CD4-positive, alpha-beta memory T cell (primary cell): ENCODE measurements at regions of chr13 and their contacts with region 1.

Region 1: GRCh38 chr13:44484562-44485138 is 91.5 kb downstream of the TSC22D1 start:
- DNase-seq: no peak
- H3K4me3 ChIP-seq: no peak overlapping the region
- H3K4me3 Mint-ChIP-seq: peak overlapping the region; percentile 9 to 84 (median 64)
- H3K27ac ChIP-seq: no peak overlapping the region
- H3K27ac Mint-ChIP-seq: peak overlapping the region in 3 of 7 donors; percentile 7 to 73 (median 70)
- H3K4me1 ChIP-seq: peaks cover 17% of the 10 kb centered on the region
- H3K4me1 Mint-ChIP-seq: peaks cover 11 to 22% (median 12%) of the 10 kb centered on the region in 4 donors
- H3K27me3 ChIP-seq: no peaks in the 10 kb centered on the region
- H3K27me3 Mint-ChIP-seq: no peaks in the 10 kb centered on the region

Region 2: GRCh38 chr13:44340508-44340907 is 144.1 kb before region 1 on chr13:
- CTCF ChIA-PET with region 1: no interaction called
- POLR2A ChIA-PET with region 1: no interaction called
- intact Hi-C with region 1: no loop called
- DNase-seq: no peak
- H3K4me3 ChIP-seq: no peak overlapping the region
- H3K4me3 Mint-ChIP-seq: no peak overlapping the region
- H3K27ac ChIP-seq: no peak overlapping the region
- H3K27ac Mint-ChIP-seq: no peak overlapping the region
- H3K4me1 ChIP-seq: no peaks in the 10 kb centered on the region
- H3K4me1 Mint-ChIP-seq: peaks cover 0 to 4% (median under 1%) of the 10 kb centered on the region in 4 donors
- H3K27me3 ChIP-seq: no peaks in the 10 kb centered on the region
- H3K27me3 Mint-ChIP-seq: peaks cover 0 to 1% of the 10 kb centered on the region in 2 donors

Region 3: DNA sequence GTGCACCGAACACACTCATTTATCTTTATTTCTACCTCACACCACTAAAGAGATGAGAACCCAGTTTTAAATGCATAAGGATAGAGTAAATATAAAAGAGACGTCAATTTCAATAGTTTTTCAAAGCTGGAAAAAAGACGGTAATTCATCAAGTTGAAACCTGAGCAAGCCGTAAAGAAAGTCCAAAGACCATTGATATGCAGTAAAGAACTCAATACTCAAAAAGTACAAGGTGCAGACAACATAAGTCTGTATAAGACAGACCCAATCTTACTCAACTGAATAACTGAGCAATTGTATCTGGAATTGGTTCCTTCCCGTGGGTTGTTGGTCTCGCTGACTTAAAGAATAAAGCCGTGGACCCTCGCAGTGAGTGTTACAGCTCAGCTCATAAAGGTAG is 28.9 kb before region 1 on chr13:
- CTCF ChIA-PET with region 1: interaction called, 11 read pairs
- POLR2A ChIA-PET with region 1: no interaction called
- intact Hi-C with region 1: no loop called
- DNase-seq: no peak
- H3K4me3 ChIP-seq: no peak overlapping the region
- H3K4me3 Mint-ChIP-seq: no peak overlapping the region
- H3K27ac ChIP-seq: no peak overlapping the region
- H3K27ac Mint-ChIP-seq: no peak overlapping the region
- H3K4me1 ChIP-seq: no peaks in the 10 kb centered on the region
- H3K4me1 Mint-ChIP-seq: peaks cover 5 to 19% (median 10%) of the 10 kb centered on the region in 4 donors
- H3K27me3 ChIP-seq: no peaks in the 10 kb centered on the region
- H3K27me3 Mint-ChIP-seq: no peaks in the 10 kb centered on the region

Region 4: DNA sequence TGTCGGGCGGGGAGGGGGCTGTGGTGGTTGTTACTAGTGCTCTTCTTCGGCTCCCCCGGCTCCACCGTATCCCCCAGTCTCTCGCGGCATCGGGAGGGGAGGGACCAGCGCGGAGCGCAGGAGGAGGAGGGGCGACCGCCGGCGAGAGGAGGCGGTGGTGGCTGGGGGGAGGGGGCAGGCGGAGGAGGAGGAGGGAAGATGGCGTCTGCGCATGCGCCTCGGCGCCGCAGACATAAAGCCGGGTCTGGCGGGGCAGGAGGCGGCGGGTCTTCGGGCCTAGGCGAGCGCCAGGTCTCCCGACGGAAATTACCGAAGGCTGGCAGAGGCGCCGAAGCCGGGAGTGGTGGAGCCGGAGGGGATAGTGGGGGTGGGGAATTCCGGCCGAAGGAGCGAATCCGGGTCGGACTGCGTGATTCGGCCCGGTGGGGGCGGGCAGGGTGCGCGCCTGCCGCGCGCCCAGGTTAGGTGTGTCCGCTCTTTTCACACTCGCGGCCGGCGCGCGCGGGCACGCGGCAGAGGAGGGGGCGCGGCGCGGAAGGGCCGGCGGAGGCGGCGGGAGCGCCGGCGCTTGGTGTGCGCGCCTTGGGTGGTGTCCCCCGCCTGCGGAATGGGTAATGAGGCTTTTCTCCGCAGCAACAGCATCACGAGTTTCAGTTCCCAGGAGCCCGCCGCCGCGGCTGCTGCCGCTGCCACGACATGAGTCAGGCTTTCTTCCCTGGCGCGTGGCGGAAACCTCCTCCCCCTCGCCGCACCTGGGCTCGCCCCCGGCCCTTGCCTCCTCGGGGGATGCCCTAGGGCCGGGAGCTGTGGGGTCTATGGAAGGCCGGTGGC is 92.8 kb after region 1 on chr13:
- CTCF ChIA-PET with region 1: interaction called, 5 read pairs
- POLR2A ChIA-PET with region 1: interaction called, 4 read pairs
- intact Hi-C with region 1: loop called (anchors 2 kb)
- DNase-seq: peak; percentile 93 to 96 (median 94)
- H3K4me3 ChIP-seq: peak overlapping the region; percentile 47 to 86
- H3K4me3 Mint-ChIP-seq: peak overlapping the region; percentile 88 to 97 (median 94)
- H3K27ac ChIP-seq: peak overlapping the region; percentile 84
- H3K27ac Mint-ChIP-seq: peak overlapping the region; percentile 91 to 97 (median 95)
- H3K4me1 ChIP-seq: peaks cover 39% of the 10 kb centered on the region
- H3K4me1 Mint-ChIP-seq: peaks cover 28 to 46% (median 38%) of the 10 kb centered on the region in 4 donors
- H3K27me3 ChIP-seq: no peaks in the 10 kb centered on the region
- H3K27me3 Mint-ChIP-seq: no peaks in the 10 kb centered on the region

Region 5: DNA sequence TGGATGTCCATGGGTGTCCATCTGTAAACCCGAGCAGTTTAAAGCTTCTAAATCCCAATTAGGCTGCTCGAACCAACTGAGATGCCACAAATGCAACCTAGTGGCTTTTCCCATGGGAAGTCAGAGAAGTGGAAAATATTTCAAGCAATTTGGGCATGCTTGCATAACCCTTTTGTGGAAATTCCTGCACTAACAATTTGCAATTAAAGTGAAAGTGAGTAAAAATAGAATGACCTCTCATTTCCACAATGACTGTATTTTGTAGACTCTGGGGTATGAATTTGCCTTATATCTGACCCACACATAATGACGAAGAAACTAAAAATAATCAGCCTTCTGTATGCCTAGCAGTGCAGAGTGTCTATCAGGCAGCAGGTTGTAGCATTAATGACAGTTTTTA is 183.3 kb after region 1 on chr13:
- CTCF ChIA-PET with region 1: no interaction called
- POLR2A ChIA-PET with region 1: no interaction called
- intact Hi-C with region 1: no loop called
- DNase-seq: no peak
- H3K4me3 ChIP-seq: no peak overlapping the region
- H3K4me3 Mint-ChIP-seq: no peak overlapping the region
- H3K27ac ChIP-seq: no peak overlapping the region
- H3K27ac Mint-ChIP-seq: no peak overlapping the region
- H3K4me1 ChIP-seq: no peaks in the 10 kb centered on the region
- H3K4me1 Mint-ChIP-seq: no peaks in the 10 kb centered on the region
- H3K27me3 ChIP-seq: no peaks in the 10 kb centered on the region
- H3K27me3 Mint-ChIP-seq: peaks cover 10 to 13% of the 10 kb centered on the region in 2 donors

Region 6: GRCh38 chr13:44879463-44880058 is 394.9 kb after region 1 on chr13:
- CTCF ChIA-PET with region 1: interaction called, 15 read pairs
- POLR2A ChIA-PET with region 1: no interaction called
- intact Hi-C with region 1: loop called (anchors 1 kb)
- DNase-seq: no peak
- H3K4me3 ChIP-seq: no peak overlapping the region
- H3K4me3 Mint-ChIP-seq: no peak overlapping the region
- H3K27ac ChIP-seq: no peak overlapping the region
- H3K27ac Mint-ChIP-seq: peak overlapping the region in 2 of 7 donors; percentile 30 to 58
- H3K4me1 ChIP-seq: no peaks in the 10 kb centered on the region
- H3K4me1 Mint-ChIP-seq: no peaks in the 10 kb centered on the region
- H3K27me3 ChIP-seq: no peaks in the 10 kb centered on the region
- H3K27me3 Mint-ChIP-seq: peaks cover 3 to 6% of the 10 kb centered on the region in 2 donors

Region 7: DNA sequence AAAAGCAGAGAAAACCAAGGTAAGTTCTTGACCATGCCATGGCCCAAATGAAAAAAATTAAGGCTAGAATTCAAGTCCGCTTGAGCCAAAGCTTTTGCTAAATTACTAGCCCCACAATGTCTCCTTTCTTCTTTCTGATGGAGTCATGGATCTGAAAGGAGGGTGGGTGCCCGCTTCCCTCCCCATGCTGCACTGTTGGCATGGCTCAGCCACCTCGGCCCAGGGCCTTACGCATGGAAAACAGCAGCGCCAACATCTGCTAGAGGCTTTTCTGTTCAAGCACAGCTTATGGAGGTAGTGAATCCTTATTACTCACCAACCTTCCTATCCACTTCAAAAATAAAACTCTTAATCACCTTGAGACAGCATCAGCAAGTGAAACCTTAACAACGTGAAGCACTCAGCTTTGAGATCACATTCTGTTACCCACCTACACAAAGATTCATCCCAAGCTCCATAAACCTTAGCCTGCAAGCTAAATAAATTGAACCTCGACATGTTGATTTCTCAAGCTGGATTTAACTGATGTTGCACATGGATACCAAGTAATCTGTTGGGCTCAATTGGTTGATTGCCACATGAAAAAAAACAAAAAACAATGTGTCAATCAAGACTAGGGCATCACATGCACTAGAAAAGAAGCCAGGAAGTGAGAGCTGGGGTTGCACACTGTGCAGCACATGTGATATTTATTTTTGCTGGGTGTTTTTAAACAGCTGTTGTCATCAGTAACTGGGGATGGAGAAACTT is 813.0 kb after region 1 on chr13:
- CTCF ChIA-PET with region 1: no interaction called
- POLR2A ChIA-PET with region 1: no interaction called
- intact Hi-C with region 1: loop called (anchors 10 kb)
- DNase-seq: peak in 4 of 5 donors; percentile 45 to 56 (median 50)
- H3K4me3 ChIP-seq: no peak overlapping the region
- H3K4me3 Mint-ChIP-seq: peak overlapping the region in 6 of 8 donors; percentile 32 to 71 (median 38)
- H3K27ac ChIP-seq: peak overlapping the region; percentile 10
- H3K27ac Mint-ChIP-seq: peak overlapping the region; percentile 47 to 90 (median 81)
- H3K4me1 ChIP-seq: peaks cover 40% of the 10 kb centered on the region
- H3K4me1 Mint-ChIP-seq: peaks cover 31 to 50% (median 39%) of the 10 kb centered on the region in 4 donors
- H3K27me3 ChIP-seq: no peaks in the 10 kb centered on the region
- H3K27me3 Mint-ChIP-seq: peaks cover 1 to 3% of the 10 kb centered on the region in 2 donors